ENCODE measurements at regions of chr2 and their contacts with region 1.

Region 1: GRCh38 chr2:124804014-124804940 is 779.2 kb downstream of the CNTNAP5 start:
- DNase-seq: no peak
- ATAC-seq: peak in 3 of 8 donors; percentile 33 to 58 (median 34)
- H3K4me3 ChIP-seq: no peak overlapping the region
- H3K27ac ChIP-seq: no peak overlapping the region
- H3K4me1 ChIP-seq: no peaks in the 10 kb centered on the region
- H3K27me3 ChIP-seq: no peaks in the 10 kb centered on the region
- CTCF ChIP-seq: peak; percentile 16 to 61 (median 51)

Region 2: GRCh38 chr2:124027182-124027581 is 777.1 kb before region 1 on chr2:
- intact Hi-C with region 1: loop called in 4 of 10 experiments (anchors 5 to 10 kb)
- DNase-seq: peak in 1 of 2 donors; percentile 6
- ATAC-seq: peak in 4 of 8 donors; percentile 50 to 73 (median 59)
- H3K4me3 ChIP-seq: no peak overlapping the region
- H3K27ac ChIP-seq: no peak overlapping the region
- H3K4me1 ChIP-seq: peaks cover 0 to 10% (median 0%) of the 10 kb centered on the region in 9 donors
- H3K27me3 ChIP-seq: peaks cover 9 to 57% (median 42%) of the 10 kb centered on the region in 7 donors
- CTCF ChIP-seq: peak; percentile 16 to 77 (median 66)

Region 3: DNA sequence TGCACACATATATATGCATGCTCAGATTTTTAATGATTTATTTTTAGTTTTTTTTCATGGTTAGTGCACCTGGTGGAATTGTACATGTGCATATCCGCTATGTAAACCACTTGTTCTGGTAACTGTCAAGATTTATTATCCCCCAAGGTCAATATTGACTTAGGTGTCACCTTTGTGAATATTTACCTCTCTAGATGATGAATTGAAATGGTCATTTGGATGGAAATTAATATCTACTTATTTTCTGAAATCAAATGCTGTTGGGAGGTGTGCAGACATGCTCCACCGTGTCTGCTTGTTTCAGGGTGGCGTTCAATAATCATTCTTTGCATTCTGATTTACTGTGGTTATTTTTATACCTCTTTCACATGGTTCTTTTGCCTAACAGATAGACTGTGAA is 764.4 kb before region 1 on chr2:
- intact Hi-C with region 1: loop called in 1 of 10 experiments (anchors 10 kb)
- DNase-seq: no peak
- ATAC-seq: no peak
- H3K4me3 ChIP-seq: no peak overlapping the region
- H3K27ac ChIP-seq: no peak overlapping the region
- H3K4me1 ChIP-seq: no peaks in the 10 kb centered on the region
- H3K27me3 ChIP-seq: no peaks in the 10 kb centered on the region
- CTCF ChIP-seq: no peak

Region 4: DNA sequence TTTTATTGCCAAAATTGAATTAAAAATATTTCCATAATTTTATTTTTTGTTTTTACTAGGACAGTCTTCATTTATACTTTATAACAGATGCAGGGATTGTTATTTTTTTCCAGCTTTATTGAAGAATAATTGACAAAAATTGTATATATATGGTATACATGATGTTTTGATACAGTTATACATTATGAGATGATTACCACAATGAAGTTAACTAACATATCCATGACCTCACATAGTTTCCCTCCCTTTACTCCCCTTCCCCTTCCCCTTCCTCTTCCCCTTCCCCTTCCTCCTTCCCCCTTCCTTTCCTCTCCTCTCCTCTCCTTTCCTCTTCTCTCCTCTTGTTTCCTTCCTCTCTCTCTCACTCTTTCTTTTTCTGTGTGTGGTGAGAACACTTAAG is 79.1 kb before region 1 on chr2:
- intact Hi-C with region 1: no loop called
- DNase-seq: no peak
- ATAC-seq: no peak
- H3K4me3 ChIP-seq: no peak overlapping the region
- H3K27ac ChIP-seq: no peak overlapping the region
- H3K4me1 ChIP-seq: no peaks in the 10 kb centered on the region
- H3K27me3 ChIP-seq: no peaks in the 10 kb centered on the region
- CTCF ChIP-seq: no peak

Region 5: DNA sequence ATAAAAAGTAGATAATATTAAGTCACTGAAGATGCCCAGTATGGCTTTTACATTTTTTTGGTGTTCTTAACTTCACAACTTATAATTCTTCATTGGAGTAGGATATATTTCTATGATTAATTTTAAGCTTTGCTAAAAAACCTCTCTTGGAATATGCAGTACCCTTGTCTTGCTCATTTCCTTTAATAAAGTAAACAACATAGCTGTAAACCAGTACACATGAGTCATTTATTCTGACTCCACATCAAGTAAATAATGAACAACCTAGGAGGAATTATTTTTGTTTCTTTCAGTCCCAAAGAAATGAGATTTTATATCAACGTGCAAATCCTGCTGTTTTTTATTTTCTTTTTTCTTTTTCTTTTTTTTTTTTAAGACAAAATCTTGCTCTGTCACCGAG is 89.9 kb after region 1 on chr2:
- intact Hi-C with region 1: no loop called
- DNase-seq: no peak
- ATAC-seq: no peak
- H3K4me3 ChIP-seq: no peak overlapping the region
- H3K27ac ChIP-seq: no peak overlapping the region
- H3K4me1 ChIP-seq: no peaks in the 10 kb centered on the region
- H3K27me3 ChIP-seq: no peaks in the 10 kb centered on the region
- CTCF ChIP-seq: no peak